ENCODE measurements at regions of chr9 and their contacts with region 1.

Region 1: DNA sequence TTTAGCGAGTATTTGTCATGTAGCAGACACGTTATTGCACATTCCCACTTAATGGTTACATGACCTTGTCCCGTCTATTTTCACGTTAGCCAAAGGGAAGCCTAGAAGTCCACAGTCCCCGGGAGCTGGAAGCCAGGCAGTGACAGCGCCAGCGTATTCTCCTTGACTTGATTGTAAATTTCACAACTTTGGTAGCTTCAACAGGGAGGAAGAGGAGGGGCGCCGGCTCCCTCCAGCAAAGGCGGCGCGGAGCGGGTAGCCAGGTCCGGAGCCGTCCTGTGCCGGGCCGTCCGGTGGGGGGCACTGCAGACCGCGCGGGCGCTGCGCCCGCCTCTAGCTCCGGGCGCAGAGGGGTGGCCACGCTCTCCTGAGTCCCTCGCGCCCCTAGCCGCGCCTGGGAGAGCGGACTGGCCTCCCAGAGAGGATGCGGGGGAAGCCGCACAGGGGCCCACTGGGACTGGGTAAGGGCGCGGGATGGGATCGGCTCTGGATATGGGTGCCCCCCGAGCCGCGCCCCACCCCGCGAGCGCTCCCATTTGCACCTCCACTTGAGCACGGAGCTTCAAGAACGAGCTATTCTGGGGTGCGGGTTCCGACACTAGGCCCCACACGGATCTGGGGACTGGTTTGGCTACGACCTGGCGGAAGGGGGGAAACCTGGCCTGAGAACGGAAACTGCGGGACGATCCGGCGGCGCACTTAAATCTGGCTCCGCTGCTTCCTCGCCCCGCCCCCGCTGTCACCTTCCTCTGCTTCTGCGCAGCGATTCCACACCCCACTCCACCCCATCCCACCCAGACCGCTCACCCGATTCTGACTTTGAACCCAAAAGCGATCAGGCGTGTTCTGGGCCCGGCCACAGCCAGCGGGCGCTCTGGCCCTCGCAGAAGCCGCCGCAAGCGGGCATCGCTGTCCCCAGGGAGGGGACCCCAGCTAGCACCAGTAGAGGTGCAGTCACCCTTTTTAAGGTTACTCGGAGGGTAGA is 23.8 kb downstream of the KLF4 start:
- DNase-seq: peak; percentile 79
- ATAC-seq: peak; percentile 98
- H3K4me3 Mint-ChIP-seq: peak overlapping the region; percentile 73
- H3K27ac Mint-ChIP-seq: no peak overlapping the region
- H3K4me1 Mint-ChIP-seq: peaks cover 10% of the 10 kb centered on the region
- H3K27me3 Mint-ChIP-seq: peaks cover 35% of the 10 kb centered on the region
- CTCF ChIP-seq: peak; percentile 74; the same call in 1 of the 2 replicates

Region 2: GRCh38 chr9:107443786-107444185 is 22.0 kb before region 1 on chr9:
- CTCF ChIA-PET with region 1: interaction called, 17 read pairs
- POLR2A ChIA-PET with region 1: no interaction called
- DNase-seq: no peak
- ATAC-seq: no peak
- H3K4me3 Mint-ChIP-seq: no peak overlapping the region
- H3K27ac Mint-ChIP-seq: no peak overlapping the region
- H3K4me1 Mint-ChIP-seq: peaks cover 12% of the 10 kb centered on the region
- H3K27me3 Mint-ChIP-seq: no peaks in the 10 kb centered on the region
- CTCF ChIP-seq: no peak

Region 3: GRCh38 chr9:107489687-107490605 is 24.2 kb after region 1 on chr9 and contains the start of gene KLF4:
- CTCF ChIA-PET with region 1: interaction called, 51 read pairs
- POLR2A ChIA-PET with region 1: no interaction called
- DNase-seq: peak; percentile 80
- ATAC-seq: peak; percentile 49
- H3K4me3 Mint-ChIP-seq: peak within 1 kb of the TSS; percentile 85
- H3K27ac Mint-ChIP-seq: no peak within 1 kb of the TSS
- H3K4me1 Mint-ChIP-seq: peaks cover 39% of the 10 kb centered on the region
- H3K27me3 Mint-ChIP-seq: peaks cover 61% of the 10 kb centered on the region
- CTCF ChIP-seq: no peak
- total RNA-seq, gene KLF4: 5.9 to 8.9 TPM (median 7.6 TPM) in 3 replicates

Region 4: GRCh38 chr9:107539427-107540163 is 73.8 kb after region 1 on chr9:
- CTCF ChIA-PET with region 1: no interaction called
- POLR2A ChIA-PET with region 1: no interaction called
- DNase-seq: peak; percentile 54
- ATAC-seq: peak; percentile 99
- H3K4me3 Mint-ChIP-seq: no peak overlapping the region
- H3K27ac Mint-ChIP-seq: no peak overlapping the region
- H3K4me1 Mint-ChIP-seq: peaks cover 41% of the 10 kb centered on the region
- H3K27me3 Mint-ChIP-seq: no peaks in the 10 kb centered on the region
- CTCF ChIP-seq: 0 out of 2 replicates have a peak, but pooled peaks have one; percentile 20